Heart right ventricle (tissue), 16 donors: ENCODE measurements at regions of chr19 and their contacts with region 1.

Region 1: GRCh38 chr19:51607920-51608562 is 22.2 kb downstream of the SIGLEC5 start:
- DNase-seq: peak; percentile 74 to 76
- ATAC-seq: peak in 7 of 8 donors; percentile 39 to 75 (median 61)
- H3K4me3 ChIP-seq: no peak overlapping the region
- H3K27ac ChIP-seq: no peak overlapping the region
- H3K4me1 ChIP-seq: no peaks in the 10 kb centered on the region
- H3K27me3 ChIP-seq: peaks cover 0 to 20% (median 8%) of the 10 kb centered on the region in 7 donors
- CTCF ChIP-seq: peak; percentile 15 to 74 (median 55)

Region 2: GRCh38 chr19:51651216-51651846 is 43.3 kb after region 1 on chr19:
- intact Hi-C with region 1: loop called in 1 of 10 experiments (anchors 5 kb)
- DNase-seq: no peak
- ATAC-seq: peak in 2 of 8 donors; percentile 53 to 76
- H3K4me3 ChIP-seq: no peak overlapping the region
- H3K27ac ChIP-seq: peak overlapping the region in 1 of 10 donors; percentile 33
- H3K4me1 ChIP-seq: peaks cover 0 to 29% (median 0%) of the 10 kb centered on the region in 9 donors
- H3K27me3 ChIP-seq: peaks cover 0 to 29% (median 8%) of the 10 kb centered on the region in 7 donors
- CTCF ChIP-seq: no peak